ENCODE measurements at regions of chr17 and their contacts with region 1.

Region 1: GRCh38 chr17:37373530-37374159 is 2.1 kb upstream of the C17orf78 start:
- DNase-seq: peak; percentile 87
- ATAC-seq: peak; percentile 100
- H3K4me3 ChIP-seq: no peak overlapping the region
- H3K27ac ChIP-seq: no peak overlapping the region
- H3K4me1 ChIP-seq: no peaks in the 10 kb centered on the region; the same call in 1 of the 2 replicates
- H3K27me3 ChIP-seq: no peaks in the 10 kb centered on the region
- CTCF ChIP-seq: peak; percentile 100; the same call in 1 of the 2 replicates
- POLR2A ChIP-seq: peak; percentile 48; the same call in 1 of the 2 replicates
- RAD21 ChIP-seq: peak; percentile 100

Region 2: DNA sequence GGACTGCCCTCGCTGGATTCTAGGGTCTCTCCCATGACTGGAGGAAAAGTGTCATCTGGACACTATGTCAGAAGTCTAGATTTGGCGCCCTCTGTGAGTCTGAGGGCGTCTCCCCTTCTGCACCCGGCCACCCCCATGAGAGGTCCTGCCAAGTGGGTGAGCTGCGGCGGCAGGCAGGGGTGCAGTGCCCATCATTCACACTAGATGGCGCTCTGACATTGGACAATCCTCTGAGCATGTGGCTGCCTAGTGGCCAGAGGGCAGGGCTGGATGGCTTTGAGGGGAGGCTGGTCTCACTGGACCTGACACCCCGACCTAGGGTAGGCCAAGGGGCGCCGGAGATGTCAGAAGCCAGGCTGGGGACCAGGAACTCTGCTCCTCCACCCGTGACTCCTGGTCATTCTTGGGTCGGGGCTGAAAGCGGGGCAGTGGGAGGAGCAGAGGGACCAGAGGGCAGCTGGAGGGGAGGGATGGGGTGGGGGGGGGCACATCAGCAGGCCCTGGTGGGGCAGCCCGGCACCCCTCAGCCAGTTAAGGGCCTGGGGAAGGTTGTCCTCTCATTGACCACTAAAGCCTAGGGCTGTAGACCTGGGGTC is 744.3 kb before region 1 on chr17:
- CTCF ChIA-PET with region 1: no interaction called
- POLR2A ChIA-PET with region 1: no interaction called
- dilution Hi-C with region 1: no loop called
- in situ Hi-C with region 1: no loop called
- intact Hi-C with region 1: loop called (anchors 2 kb)
- DNase-seq: peak; percentile 51
- ATAC-seq: peak; percentile 97
- H3K4me3 ChIP-seq: no peak overlapping the region
- H3K27ac ChIP-seq: no peak overlapping the region
- H3K4me1 ChIP-seq: peaks cover 2% of the 10 kb centered on the region; the same call in 1 of the 2 replicates
- H3K27me3 ChIP-seq: peaks cover 45% of the 10 kb centered on the region
- CTCF ChIP-seq: peak; percentile 98
- POLR2A ChIP-seq: no peak
- RAD21 ChIP-seq: peak; percentile 94

Region 3: DNA sequence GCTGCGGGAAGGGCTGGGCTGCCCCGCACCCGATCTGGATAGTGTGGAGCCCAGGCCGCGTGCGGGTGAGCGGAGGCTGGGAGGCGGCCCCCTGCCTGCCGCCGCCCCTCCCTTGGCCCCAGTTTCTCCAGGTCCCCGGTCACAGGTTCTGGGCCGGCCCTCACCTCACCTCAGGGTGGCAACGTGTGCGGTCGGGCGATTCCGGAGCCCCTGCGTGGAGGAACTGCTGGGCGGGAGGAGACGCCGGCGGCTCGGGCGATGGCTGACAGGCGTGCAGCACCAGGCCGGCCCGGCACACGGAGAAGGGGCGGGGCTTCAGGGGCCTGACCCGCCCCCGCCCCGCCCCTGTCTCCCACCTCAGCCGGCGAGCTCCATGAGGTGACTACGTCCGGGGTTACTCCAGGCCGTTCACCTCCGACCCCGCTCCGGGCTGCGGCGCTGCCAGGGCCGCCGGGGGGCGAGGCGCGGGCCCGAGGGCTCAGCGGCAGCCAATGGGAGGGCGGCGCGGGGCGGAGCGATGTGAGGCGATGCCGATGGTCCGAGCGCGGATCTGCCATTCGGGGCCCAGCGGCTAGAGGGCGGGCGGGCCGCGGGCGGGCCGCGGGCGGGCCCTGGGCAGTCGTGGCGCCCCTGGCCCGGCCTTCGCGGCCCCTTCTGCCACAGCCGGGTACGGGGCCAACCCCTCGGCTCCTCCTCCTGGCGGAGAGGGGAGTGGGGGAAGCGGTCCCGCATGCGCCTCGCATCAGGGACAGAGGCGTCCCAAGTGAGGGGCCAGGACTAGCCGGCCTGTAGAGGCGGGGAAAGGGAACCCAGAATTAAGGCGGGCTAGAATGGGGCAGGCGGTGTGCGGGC is 14.6 kb before region 1 on chr17:
- CTCF ChIA-PET with region 1: interaction called, 10 read pairs
- POLR2A ChIA-PET with region 1: no interaction called
- dilution Hi-C with region 1: no loop called
- in situ Hi-C with region 1: no loop called
- intact Hi-C with region 1: no loop called
- DNase-seq: peak; percentile 86
- ATAC-seq: peak; percentile 94
- H3K4me3 ChIP-seq: peak overlapping the region; percentile 80
- H3K27ac ChIP-seq: peak overlapping the region; percentile 76
- H3K4me1 ChIP-seq: peaks cover 5% of the 10 kb centered on the region
- H3K27me3 ChIP-seq: no peaks in the 10 kb centered on the region
- CTCF ChIP-seq: peak; percentile 35; the same call in 1 of the 2 replicates
- POLR2A ChIP-seq: peak; percentile 66
- RAD21 ChIP-seq: no peak

Region 4: GRCh38 chr17:37465069-37465616 is 91.5 kb after region 1 on chr17:
- CTCF ChIA-PET with region 1: no interaction called
- POLR2A ChIA-PET with region 1: no interaction called
- dilution Hi-C with region 1: no loop called
- in situ Hi-C with region 1: no loop called
- intact Hi-C with region 1: no loop called
- DNase-seq: peak; percentile 72
- ATAC-seq: peak; percentile 29; the same call in 1 of the 2 replicates
- H3K4me3 ChIP-seq: no peak overlapping the region
- H3K27ac ChIP-seq: no peak overlapping the region
- H3K4me1 ChIP-seq: no peaks in the 10 kb centered on the region
- H3K27me3 ChIP-seq: no peaks in the 10 kb centered on the region
- CTCF ChIP-seq: no peak
- POLR2A ChIP-seq: no peak
- RAD21 ChIP-seq: no peak

Region 5: DNA sequence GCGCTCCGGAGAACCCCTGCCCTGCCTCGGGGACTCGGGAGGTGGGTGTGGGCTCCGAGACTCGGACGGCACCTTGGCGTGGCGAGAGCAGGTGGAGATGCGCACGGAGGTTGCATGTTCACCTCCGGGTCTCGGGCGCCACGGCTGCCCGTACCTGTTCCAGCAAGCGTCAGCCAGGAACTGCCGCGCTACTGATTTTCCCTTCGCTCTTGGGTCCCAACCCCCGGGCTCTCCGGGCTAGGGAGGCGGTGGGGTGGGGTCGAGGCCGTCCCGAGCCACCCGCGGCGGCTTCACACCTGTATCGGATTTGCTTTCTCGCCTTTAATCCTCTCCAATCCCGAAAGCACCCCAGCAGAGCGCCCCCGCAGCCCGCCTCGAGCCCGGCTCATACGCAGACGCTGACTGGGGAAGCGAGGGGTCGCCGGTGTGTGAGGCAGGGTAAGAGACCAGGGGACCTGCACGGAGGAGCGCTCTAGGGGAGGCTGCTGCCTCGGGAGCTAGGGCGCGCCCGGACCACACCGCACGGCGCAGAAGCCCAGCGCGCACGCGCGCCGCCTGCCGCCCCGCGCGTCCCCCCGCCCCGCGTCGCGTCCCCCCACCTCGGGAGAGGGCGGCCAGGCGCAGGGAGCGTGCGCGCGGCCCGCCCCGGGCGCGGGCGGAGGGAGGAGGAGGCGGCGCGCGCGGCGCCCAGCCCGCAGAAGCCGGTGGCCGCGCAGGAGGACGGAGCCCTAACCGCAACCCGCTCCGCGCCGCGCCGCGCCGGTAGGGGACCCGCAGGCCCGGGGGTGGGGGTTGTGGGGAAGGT is 115.8 kb after region 1 on chr17 and contains the start of gene DUSP14:
- CTCF ChIA-PET with region 1: no interaction called
- POLR2A ChIA-PET with region 1: no interaction called
- dilution Hi-C with region 1: no loop called
- in situ Hi-C with region 1: no loop called
- intact Hi-C with region 1: loop called (anchors 2 kb)
- DNase-seq: peak; percentile 77
- ATAC-seq: peak; percentile 69
- H3K4me3 ChIP-seq: peak within 1 kb of the TSS; percentile 95
- H3K27ac ChIP-seq: peak within 1 kb of the TSS; percentile 94
- H3K4me1 ChIP-seq: peaks cover 11% of the 10 kb centered on the region
- H3K27me3 ChIP-seq: no peaks in the 10 kb centered on the region
- CTCF ChIP-seq: no peak
- POLR2A ChIP-seq: peak; percentile 78
- RAD21 ChIP-seq: no peak
- total RNA-seq, gene DUSP14: 97.5 and 102 TPM in 2 replicates

Region 6: DNA sequence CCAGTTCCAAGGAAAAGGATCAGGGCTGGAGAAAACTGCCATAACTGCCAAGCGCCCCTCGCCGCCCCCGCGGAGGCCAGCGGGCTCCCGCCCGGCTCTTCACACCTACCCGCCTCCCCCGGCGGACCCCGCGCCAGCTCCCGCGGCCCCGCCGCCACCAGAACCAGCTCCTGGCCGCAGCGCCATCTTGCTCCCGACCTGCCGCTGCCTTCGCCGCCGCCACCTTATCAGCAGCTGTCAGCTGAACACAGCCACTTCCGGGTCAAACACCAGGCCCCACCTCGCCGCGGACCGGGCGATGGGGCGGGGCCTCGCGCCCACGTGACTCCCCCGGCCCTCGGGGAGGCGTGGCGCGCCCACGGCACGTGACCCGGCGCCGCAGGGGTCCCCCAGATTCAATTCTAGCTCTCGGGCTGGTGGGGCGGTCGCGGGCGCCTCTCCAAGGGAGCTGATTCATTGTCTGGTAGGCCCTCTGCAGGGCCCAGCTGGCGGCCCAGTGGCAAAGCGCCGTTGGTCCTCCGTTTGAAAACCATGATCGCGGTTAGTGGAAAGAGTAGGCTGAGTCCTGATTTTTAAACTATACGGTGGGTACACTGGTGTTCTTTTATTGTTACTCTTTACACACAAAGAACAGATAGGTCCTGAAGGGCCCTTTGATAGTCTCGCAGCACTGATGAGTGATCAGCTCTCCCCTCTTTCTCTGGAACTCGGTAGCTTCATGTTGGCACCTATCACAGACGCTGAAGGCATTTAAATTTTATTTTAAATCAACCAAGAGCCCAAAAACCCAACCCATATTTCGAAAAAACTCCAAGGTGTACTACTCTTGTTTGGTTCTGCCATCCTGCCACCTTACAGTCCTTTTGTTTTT is 235.8 kb after region 1 on chr17 and contains the start of gene SYNRG:
- CTCF ChIA-PET with region 1: no interaction called
- POLR2A ChIA-PET with region 1: no interaction called
- dilution Hi-C with region 1: no loop called
- in situ Hi-C with region 1: no loop called
- intact Hi-C with region 1: loop called (anchors 10 kb)
- DNase-seq: peak; percentile 94
- ATAC-seq: peak; percentile 88
- H3K4me3 ChIP-seq: peak within 1 kb of the TSS; percentile 89
- H3K27ac ChIP-seq: peak within 1 kb of the TSS; percentile 90
- H3K4me1 ChIP-seq: peaks cover 6% of the 10 kb centered on the region
- H3K27me3 ChIP-seq: no peaks in the 10 kb centered on the region
- CTCF ChIP-seq: peak; percentile 41
- POLR2A ChIP-seq: peak; percentile 74
- RAD21 ChIP-seq: peak; percentile 27; the same call in 1 of the 2 replicates
- total RNA-seq, gene SYNRG: 11.4 and 11.7 TPM in 2 replicates